K562 (cell line): ENCODE measurements at regions of chr7 and their contacts with region 1.

Region 1: DNA sequence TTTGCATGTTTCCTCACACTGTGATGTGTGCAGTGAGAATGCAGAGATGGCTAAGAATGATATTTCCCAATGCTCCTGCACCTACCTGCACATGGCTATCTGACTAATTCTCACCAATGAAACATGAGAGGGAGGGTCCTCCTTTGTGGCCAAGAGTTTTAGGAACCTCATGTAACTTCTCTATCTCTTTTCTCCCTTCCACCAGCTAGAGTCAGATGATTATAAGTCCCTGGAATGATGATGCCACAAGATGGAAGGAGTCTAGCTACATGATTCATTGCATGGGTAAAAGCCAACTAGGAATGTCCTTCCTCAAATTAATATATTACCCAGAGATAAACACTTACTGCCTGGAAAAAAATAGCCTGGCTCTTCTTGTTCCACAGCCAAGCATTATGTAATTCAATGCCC is 55.1 kb upstream of the AASS start:
- DNase-seq: no peak
- ATAC-seq: no peak
- H3K4me3 ChIP-seq: no peak overlapping the region
- H3K27ac ChIP-seq: no peak overlapping the region
- H3K4me1 ChIP-seq: no peaks in the 10 kb centered on the region
- H3K27me3 ChIP-seq: no peaks in the 10 kb centered on the region
- CTCF ChIP-seq: no peak
- EP300 ChIP-seq: no peak
- POLR2A ChIP-seq: no peak
- RAD21 ChIP-seq: no peak

Region 2: DNA sequence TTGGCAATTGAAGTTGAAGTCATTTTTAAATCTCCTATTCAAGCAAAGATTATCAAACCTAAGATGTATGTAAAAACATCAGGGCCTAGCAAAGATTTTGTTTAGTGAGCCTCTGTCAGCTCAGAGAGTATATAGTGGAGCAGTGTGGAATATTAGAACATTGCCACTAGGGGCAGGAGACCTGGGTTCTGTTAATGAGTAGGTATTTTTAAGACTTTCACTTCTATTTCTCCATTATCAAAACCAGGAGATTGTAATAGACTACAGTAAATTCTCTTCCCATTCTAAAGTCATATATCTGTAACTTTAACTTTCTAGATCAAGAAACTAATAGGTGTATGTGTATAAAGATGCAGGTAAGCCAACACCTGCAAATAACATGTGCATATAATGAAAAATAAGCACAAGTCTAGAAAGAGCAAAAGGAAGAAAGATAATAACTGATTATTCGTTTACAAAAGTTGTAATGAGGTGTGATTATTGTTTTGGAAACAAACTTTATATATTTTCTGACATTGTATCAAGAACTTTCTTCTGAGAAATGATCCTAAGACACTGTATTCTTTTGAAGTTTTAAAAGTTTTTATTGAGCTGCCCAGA is 1861.7 kb before region 1 on chr7:
- CTCF ChIA-PET with region 1: no interaction called
- POLR2A ChIA-PET with region 1: no interaction called
- in situ Hi-C with region 1: loop called (anchors 10 kb)
- intact Hi-C with region 1: no loop called
- DNase-seq: peak; percentile 7 to 27 (median 15)
- ATAC-seq: peak; percentile 69; the same call in 2 of the 3 replicates
- H3K4me3 ChIP-seq: no peak overlapping the region
- H3K27ac ChIP-seq: no peak overlapping the region
- H3K4me1 ChIP-seq: no peaks in the 10 kb centered on the region
- H3K27me3 ChIP-seq: no peaks in the 10 kb centered on the region
- CTCF ChIP-seq: peak in 2 of 3 experiments; percentile 14 to 45; a peak in 1 of 6 replicates
- EP300 ChIP-seq: no peak
- POLR2A ChIP-seq: no peak
- RAD21 ChIP-seq: no peak